ENCODE measurements at regions of chr18 and their contacts with region 1.

Region 1: DNA sequence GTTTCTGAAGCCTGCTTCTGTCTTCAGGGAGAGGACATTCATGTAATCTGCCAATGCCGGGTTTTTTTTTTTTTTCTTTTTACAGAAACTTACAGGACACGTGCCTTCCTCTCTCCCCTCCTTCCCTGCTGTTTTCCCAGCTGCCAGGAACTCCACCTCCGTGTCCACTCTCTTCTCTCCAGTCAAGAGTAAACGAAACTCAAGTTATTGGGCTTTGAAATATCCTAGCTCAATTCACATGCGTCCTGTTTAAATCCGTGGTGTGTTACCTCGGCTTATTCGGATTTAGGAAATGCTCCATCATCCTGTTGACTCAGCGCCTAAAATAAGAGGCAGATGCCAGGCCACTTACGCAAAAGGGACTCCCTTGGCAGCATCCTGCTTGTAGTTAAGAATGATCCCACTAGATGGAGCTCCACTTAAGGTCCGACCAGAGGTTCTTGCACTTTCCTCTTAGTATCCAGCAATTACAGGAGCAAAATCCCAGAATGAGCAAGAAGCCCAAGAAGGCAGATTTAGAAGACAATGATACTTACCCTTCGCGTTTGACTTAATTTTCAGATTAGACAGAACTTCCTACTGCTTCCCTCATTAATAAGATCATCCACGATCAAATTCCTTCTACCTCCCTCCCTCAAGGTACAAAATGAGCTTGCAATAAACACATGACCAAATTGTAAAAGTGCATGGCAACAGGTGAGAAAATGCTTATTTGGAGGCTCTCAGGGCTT is 97.2 kb upstream of the ZCCHC2 start:
- DNase-seq: peak; percentile 96
- ATAC-seq: peak; percentile 95
- H3K4me3 ChIP-seq: peak overlapping the region; percentile 22
- H3K27ac ChIP-seq: peak overlapping the region; percentile 48
- H3K4me1 ChIP-seq: peaks cover 3% of the 10 kb centered on the region; the same call in 1 of the 2 replicates
- H3K27me3 ChIP-seq: peaks cover 9% of the 10 kb centered on the region
- CTCF ChIP-seq: peak; percentile 92
- POLR2A ChIP-seq: no peak
- RAD21 ChIP-seq: peak; percentile 84

Region 2: DNA sequence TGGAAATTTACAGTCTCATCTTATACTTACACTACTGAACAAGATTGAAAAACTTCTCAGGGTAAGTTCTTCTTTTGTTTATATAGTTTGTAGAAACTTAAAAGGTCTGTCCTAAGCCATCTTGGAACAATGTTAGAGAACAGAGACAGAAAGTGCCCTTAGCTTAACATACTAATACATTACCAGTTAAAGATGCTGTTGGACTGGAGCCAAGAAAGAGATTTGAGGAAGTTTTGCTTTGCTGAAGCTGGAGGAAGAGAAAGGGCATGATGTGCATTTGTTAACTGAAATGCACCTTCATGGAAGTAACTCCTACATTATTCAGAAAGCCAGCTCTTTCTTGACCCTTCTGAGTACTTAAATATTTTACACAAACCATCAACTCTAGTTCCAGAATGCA is 167.0 kb before region 1 on chr18:
- CTCF ChIA-PET with region 1: no interaction called
- POLR2A ChIA-PET with region 1: no interaction called
- dilution Hi-C with region 1: no loop called
- in situ Hi-C with region 1: no loop called
- intact Hi-C with region 1: no loop called
- DNase-seq: no peak
- ATAC-seq: no peak
- H3K4me3 ChIP-seq: no peak overlapping the region
- H3K27ac ChIP-seq: no peak overlapping the region
- H3K4me1 ChIP-seq: peaks cover 2% of the 10 kb centered on the region; the same call in 1 of the 2 replicates
- H3K27me3 ChIP-seq: no peaks in the 10 kb centered on the region
- CTCF ChIP-seq: no peak
- POLR2A ChIP-seq: no peak
- RAD21 ChIP-seq: no peak

Region 3: GRCh38 chr18:62576845-62577512 is 151.3 kb after region 1 on chr18:
- CTCF ChIA-PET with region 1: interaction called, 14 read pairs
- POLR2A ChIA-PET with region 1: no interaction called
- dilution Hi-C with region 1: no loop called
- in situ Hi-C with region 1: no loop called
- intact Hi-C with region 1: no loop called
- DNase-seq: no peak
- ATAC-seq: no peak
- H3K4me3 ChIP-seq: no peak overlapping the region
- H3K27ac ChIP-seq: no peak overlapping the region
- H3K4me1 ChIP-seq: peaks cover 1% of the 10 kb centered on the region
- H3K27me3 ChIP-seq: no peaks in the 10 kb centered on the region
- CTCF ChIP-seq: no peak
- POLR2A ChIP-seq: no peak
- RAD21 ChIP-seq: no peak

Region 4: GRCh38 chr18:62584241-62585120 is 158.9 kb after region 1 on chr18:
- CTCF ChIA-PET with region 1: interaction called, 3 read pairs
- POLR2A ChIA-PET with region 1: no interaction called
- dilution Hi-C with region 1: no loop called
- in situ Hi-C with region 1: no loop called
- intact Hi-C with region 1: loop called (anchors 1 kb)
- DNase-seq: peak; percentile 88
- ATAC-seq: peak; percentile 93
- H3K4me3 ChIP-seq: no peak overlapping the region
- H3K27ac ChIP-seq: no peak overlapping the region
- H3K4me1 ChIP-seq: peaks cover 1% of the 10 kb centered on the region; the same call in 1 of the 2 replicates
- H3K27me3 ChIP-seq: peaks cover 3% of the 10 kb centered on the region; the same call in 1 of the 2 replicates
- CTCF ChIP-seq: peak; percentile 99
- POLR2A ChIP-seq: no peak
- RAD21 ChIP-seq: peak; percentile 91

Region 5: DNA sequence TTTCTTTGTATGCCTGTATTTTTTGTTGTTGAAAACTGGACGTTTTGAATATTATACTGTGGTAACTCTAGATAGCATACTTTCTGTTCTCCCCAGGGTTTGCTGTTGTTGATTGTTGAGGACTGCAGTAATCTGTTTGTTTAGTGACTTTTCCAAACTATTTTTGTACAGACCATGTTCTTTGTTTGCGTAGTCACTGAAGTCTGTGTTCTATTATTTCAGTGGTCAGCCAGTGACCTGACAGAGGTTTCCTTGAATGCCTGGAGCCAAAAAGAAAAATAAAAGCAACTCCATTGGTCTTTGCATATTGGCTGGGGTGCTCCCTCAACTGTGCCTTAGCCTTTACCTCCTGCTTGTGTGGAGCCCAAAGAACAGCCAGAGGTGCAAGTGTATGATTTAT is 247.0 kb after region 1 on chr18:
- CTCF ChIA-PET with region 1: no interaction called
- POLR2A ChIA-PET with region 1: no interaction called
- dilution Hi-C with region 1: no loop called
- in situ Hi-C with region 1: no loop called
- intact Hi-C with region 1: no loop called
- DNase-seq: no peak
- ATAC-seq: no peak
- H3K4me3 ChIP-seq: no peak overlapping the region
- H3K27ac ChIP-seq: no peak overlapping the region
- H3K4me1 ChIP-seq: no peaks in the 10 kb centered on the region
- H3K27me3 ChIP-seq: no peaks in the 10 kb centered on the region
- CTCF ChIP-seq: no peak
- POLR2A ChIP-seq: no peak
- RAD21 ChIP-seq: no peak

Region 6: DNA sequence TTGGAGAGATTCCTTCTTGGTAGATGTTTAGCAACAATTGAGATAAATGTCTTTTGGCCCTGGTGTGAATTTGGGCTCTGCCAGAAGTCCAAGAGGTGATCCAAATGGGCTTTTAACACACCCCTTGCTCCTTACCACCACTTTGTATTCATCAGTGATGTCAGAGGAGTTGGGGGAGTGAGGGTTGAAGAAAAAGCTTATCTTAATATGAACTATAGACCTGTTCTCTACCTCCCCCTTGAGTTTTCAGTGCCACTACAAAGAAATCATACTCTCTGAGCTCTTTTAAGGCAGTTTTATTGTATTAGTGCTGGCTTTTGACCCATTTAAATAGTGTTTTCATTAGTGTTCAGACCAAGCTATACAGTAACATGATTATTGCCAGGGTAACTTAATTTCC is 518.8 kb after region 1 on chr18:
- CTCF ChIA-PET with region 1: no interaction called
- POLR2A ChIA-PET with region 1: no interaction called
- dilution Hi-C with region 1: no loop called
- in situ Hi-C with region 1: no loop called
- intact Hi-C with region 1: no loop called
- DNase-seq: no peak
- ATAC-seq: no peak
- H3K4me3 ChIP-seq: no peak overlapping the region
- H3K27ac ChIP-seq: no peak overlapping the region
- H3K4me1 ChIP-seq: peaks cover 2% of the 10 kb centered on the region; the same call in 1 of the 2 replicates
- H3K27me3 ChIP-seq: no peaks in the 10 kb centered on the region
- CTCF ChIP-seq: no peak
- POLR2A ChIP-seq: no peak
- RAD21 ChIP-seq: no peak

Region 7: GRCh38 chr18:62982600-62983251 is 557.1 kb after region 1 on chr18:
- CTCF ChIA-PET with region 1: interaction called, 4 read pairs
- POLR2A ChIA-PET with region 1: no interaction called
- dilution Hi-C with region 1: no loop called
- in situ Hi-C with region 1: loop called (anchors 5 kb)
- intact Hi-C with region 1: loop called (anchors 1 kb)
- DNase-seq: peak; percentile 63
- ATAC-seq: peak; percentile 63
- H3K4me3 ChIP-seq: no peak overlapping the region
- H3K27ac ChIP-seq: no peak overlapping the region
- H3K4me1 ChIP-seq: peaks cover 3% of the 10 kb centered on the region
- H3K27me3 ChIP-seq: peaks cover 6% of the 10 kb centered on the region
- CTCF ChIP-seq: peak; percentile 90
- POLR2A ChIP-seq: no peak
- RAD21 ChIP-seq: peak; percentile 92